Mammary epithelial cell (primary cell): ENCODE measurements at regions of chr12 and their contacts with region 1.

Region 1: DNA sequence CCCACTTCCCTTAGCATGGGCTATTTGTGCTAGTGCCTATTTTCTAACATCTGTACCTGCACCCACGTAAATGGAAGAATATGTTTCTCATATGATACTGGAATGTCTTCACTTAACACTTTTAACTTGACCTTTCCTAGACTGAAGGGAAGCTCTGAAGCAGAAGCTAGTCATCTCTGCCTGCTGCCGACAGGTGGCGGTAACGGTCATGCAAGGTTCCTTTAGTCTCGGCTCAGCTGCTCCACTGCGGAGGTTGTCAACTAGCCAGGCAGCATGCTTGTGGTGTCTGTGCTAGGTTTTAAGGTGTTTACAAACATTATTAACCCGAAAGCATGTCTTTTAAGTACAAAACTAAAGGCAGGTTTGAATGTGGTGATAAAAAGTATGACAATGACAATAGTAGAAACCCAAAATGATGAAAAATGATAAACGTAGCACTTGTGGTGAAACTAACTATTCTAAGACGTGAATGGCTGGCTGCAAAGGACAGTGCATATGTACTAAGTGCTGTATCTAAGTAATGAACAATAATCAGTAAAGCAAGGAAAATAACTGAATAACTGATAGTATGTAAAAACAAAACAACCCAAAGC is 117.2 kb downstream of the GRIN2B start:
- DNase-seq: peak; percentile 47
- H3K4me3 ChIP-seq: no peak overlapping the region
- H3K27ac ChIP-seq: no peak overlapping the region
- H3K4me1 ChIP-seq: no peaks in the 10 kb centered on the region
- H3K27me3 ChIP-seq: peaks cover 3% of the 10 kb centered on the region
- CTCF ChIP-seq: peak; percentile 95 to 98

Region 2: DNA sequence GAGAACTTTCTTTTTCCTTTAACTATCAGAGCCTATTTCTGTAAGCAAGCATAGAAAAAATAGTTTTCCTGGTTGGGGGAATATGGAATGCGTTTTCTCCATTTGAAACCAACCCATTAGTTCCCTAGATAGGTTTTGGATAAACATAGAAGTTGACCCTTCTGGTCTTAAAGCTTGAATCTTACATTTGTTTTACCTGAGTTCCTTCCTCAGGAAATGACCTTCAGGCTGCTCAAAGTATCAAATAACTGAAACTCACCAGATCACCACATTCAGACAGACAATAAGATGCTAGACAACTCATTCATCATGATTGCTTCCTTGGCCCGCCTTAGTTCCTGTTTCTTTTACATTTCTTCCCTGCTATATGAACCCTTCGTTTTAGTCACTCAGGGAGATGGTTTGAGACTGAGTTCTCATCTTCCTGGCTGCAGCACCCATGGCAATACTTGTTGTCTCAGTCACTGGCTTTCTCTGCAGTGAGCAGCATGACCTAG is 1649.5 kb before region 1 on chr12:
- CTCF ChIA-PET with region 1: no interaction called
- dilution Hi-C with region 1: no loop called
- in situ Hi-C with region 1: no loop called
- intact Hi-C with region 1: no loop called
- DNase-seq: peak; percentile 19
- H3K4me3 ChIP-seq: no peak overlapping the region
- H3K27ac ChIP-seq: no peak overlapping the region
- H3K4me1 ChIP-seq: no peaks in the 10 kb centered on the region
- H3K27me3 ChIP-seq: no peaks in the 10 kb centered on the region
- CTCF ChIP-seq: no peak

Region 3: DNA sequence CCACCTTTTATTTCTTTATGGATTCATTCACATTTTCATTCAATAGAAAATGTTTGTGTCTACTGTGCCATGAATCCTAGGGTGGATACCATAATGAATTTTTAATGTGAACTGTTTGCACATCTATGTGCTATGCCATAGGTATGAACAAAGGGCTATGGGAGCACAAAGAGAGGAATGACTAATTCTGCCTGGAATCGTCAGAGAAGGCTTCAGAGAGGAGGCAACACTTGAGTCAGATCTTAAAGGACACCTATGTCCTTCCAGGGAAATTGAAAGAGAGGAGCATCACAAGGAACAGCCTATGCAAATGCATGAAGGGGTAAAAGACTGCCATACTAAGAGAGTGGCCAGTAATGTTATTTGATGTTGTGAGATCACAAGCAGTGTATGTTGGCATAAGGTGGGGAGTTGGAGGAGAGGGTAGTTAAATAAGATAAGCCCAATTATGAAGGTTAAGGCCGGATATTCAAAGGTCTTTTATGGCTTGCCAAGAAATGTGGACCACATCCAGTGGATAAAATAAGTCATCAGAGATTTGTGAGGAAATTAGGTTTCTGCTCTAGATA is 129.5 kb before region 1 on chr12:
- CTCF ChIA-PET with region 1: no interaction called
- dilution Hi-C with region 1: no loop called
- in situ Hi-C with region 1: no loop called
- intact Hi-C with region 1: loop called (anchors 5 kb)
- DNase-seq: peak; percentile 5
- H3K4me3 ChIP-seq: no peak overlapping the region
- H3K27ac ChIP-seq: no peak overlapping the region
- H3K4me1 ChIP-seq: no peaks in the 10 kb centered on the region
- H3K27me3 ChIP-seq: no peaks in the 10 kb centered on the region
- CTCF ChIP-seq: no peak

Region 4: GRCh38 chr12:13941258-13942249 is 77.4 kb after region 1 on chr12:
- CTCF ChIA-PET with region 1: no interaction called
- dilution Hi-C with region 1: no loop called
- in situ Hi-C with region 1: no loop called
- intact Hi-C with region 1: loop called (anchors 10 kb)
- DNase-seq: peak; percentile 46
- H3K4me3 ChIP-seq: no peak overlapping the region
- H3K27ac ChIP-seq: no peak overlapping the region
- H3K4me1 ChIP-seq: no peaks in the 10 kb centered on the region
- H3K27me3 ChIP-seq: no peaks in the 10 kb centered on the region
- CTCF ChIP-seq: peak; percentile 48 to 58